ENCODE measurements at regions of chr7 and their contacts with region 1.

Region 1: DNA sequence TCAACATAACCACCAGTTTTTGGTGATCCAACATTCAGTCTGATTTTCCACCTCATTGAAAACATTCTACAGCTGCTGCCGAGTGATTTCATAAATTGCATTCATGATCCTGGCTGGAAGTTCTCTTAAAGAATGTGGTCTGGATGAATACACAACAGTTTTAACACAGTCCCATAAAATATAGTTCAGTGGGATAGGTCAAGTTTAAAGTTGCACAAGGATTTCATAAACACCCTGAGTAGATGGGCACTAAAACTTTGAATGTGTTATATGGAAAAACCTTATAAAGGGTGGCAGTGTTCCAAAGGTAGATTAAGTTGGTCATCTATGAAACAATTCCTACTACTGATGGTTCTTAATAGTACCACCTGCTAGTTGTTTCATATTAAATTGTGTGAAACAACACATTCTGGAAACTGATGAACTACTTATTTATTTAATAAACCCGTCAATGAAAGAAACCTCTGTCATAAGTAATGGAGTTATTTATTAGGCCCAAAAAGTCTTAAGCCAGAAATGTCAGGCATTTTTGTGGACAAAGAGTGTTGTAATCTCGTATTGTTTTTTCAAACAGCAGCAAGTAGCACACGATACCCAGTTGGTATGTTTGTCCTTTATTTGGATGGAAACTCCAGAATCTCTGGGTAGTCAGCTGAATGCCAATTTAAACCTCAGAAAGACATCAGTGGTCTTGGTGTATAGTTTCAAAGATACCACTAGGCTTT is 14.3 kb upstream of the RPA3 start:
- DNase-seq: no peak
- ATAC-seq: no peak
- H3K4me3 ChIP-seq: no peak overlapping the region
- H3K4me3 Mint-ChIP-seq: no peak overlapping the region
- H3K27ac ChIP-seq: no peak overlapping the region
- H3K27ac Mint-ChIP-seq: peak overlapping the region in 1 of 9 donors; percentile 10
- H3K4me1 ChIP-seq: no peaks in the 10 kb centered on the region
- H3K4me1 Mint-ChIP-seq: peaks cover 0 to 14% (median 4%) of the 10 kb centered on the region in 7 donors
- H3K27me3 ChIP-seq: no peaks in the 10 kb centered on the region
- H3K27me3 Mint-ChIP-seq: no peaks in the 10 kb centered on the region

Region 2: DNA sequence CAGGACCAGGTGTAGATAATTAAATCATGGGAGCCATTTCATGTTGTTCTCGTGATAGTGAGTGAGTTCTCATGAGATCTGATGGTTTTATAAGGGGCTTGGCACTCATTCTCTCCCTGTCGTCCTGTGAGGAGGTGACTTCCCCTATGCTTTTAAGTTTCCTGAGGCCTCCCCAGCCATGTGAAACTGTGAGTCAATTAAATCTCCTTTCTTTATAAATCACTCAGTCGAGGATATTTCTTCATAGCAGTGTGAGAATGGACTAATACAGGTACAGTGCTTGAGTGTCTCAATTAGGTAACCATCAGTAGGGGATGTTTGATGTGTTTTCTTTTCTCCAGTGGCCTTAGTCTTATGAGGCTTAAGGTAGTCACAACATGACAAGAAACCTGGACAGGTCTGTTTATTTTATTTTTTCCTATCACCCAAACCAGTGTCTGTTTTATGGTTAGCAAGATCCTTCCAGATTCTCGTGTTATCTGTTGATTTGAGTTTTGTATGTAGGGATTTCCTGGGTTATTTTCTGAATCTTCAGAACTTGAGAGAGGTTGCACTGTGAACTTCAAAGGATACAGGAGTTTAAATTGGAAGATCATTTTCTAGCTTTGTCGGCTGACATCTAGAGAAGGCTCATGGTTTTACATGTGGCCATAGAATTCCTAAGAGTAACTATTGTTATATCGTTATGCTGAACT is 60.0 kb before region 1 on chr7:
- CTCF ChIA-PET with region 1: no interaction called
- POLR2A ChIA-PET with region 1: no interaction called
- intact Hi-C with region 1: no loop called
- DNase-seq: no peak
- ATAC-seq: no peak
- H3K4me3 ChIP-seq: no peak overlapping the region
- H3K4me3 Mint-ChIP-seq: peak overlapping the region in 9 of 10 donors; percentile 40 to 74 (median 65)
- H3K27ac ChIP-seq: peak overlapping the region; percentile 55
- H3K27ac Mint-ChIP-seq: peak overlapping the region; percentile 30 to 90 (median 79)
- H3K4me1 ChIP-seq: no peaks in the 10 kb centered on the region
- H3K4me1 Mint-ChIP-seq: peaks cover 21 to 68% (median 59%) of the 10 kb centered on the region in 7 donors
- H3K27me3 ChIP-seq: no peaks in the 10 kb centered on the region
- H3K27me3 Mint-ChIP-seq: no peaks in the 10 kb centered on the region

Region 3: GRCh38 chr7:7696458-7697119 is 36.1 kb before region 1 on chr7:
- CTCF ChIA-PET with region 1: no interaction called
- POLR2A ChIA-PET with region 1: no interaction called
- intact Hi-C with region 1: loop called in 1 of 2 experiments (anchors 5 kb)
- DNase-seq: no peak
- ATAC-seq: no peak
- H3K4me3 ChIP-seq: no peak overlapping the region
- H3K4me3 Mint-ChIP-seq: no peak overlapping the region
- H3K27ac ChIP-seq: no peak overlapping the region
- H3K27ac Mint-ChIP-seq: no peak overlapping the region
- H3K4me1 ChIP-seq: peaks cover 3 to 7% of the 10 kb centered on the region in 2 donors
- H3K4me1 Mint-ChIP-seq: peaks cover 6 to 43% (median 24%) of the 10 kb centered on the region in 7 donors
- H3K27me3 ChIP-seq: no peaks in the 10 kb centered on the region
- H3K27me3 Mint-ChIP-seq: no peaks in the 10 kb centered on the region

Region 4: GRCh38 chr7:7746458-7746857 is 13.7 kb after region 1 on chr7:
- CTCF ChIA-PET with region 1: no interaction called
- POLR2A ChIA-PET with region 1: interaction called, 3 read pairs
- intact Hi-C with region 1: loop called in 1 of 2 experiments (anchors 2 kb)
- DNase-seq: no peak
- ATAC-seq: no peak
- H3K4me3 ChIP-seq: no peak overlapping the region
- H3K4me3 Mint-ChIP-seq: no peak overlapping the region
- H3K27ac ChIP-seq: no peak overlapping the region
- H3K27ac Mint-ChIP-seq: no peak overlapping the region
- H3K4me1 ChIP-seq: no peaks in the 10 kb centered on the region
- H3K4me1 Mint-ChIP-seq: peaks cover 0 to 13% (median 5%) of the 10 kb centered on the region in 7 donors
- H3K27me3 ChIP-seq: no peaks in the 10 kb centered on the region
- H3K27me3 Mint-ChIP-seq: no peaks in the 10 kb centered on the region

Measured in naive thymus-derived CD4-positive, alpha-beta T cell (primary cell).